HEK293 (cell line): ENCODE measurements at regions of chr6 and their contacts with region 1.

Region 1: GRCh38 chr6:82270881-82271645 is 23.5 kb upstream of the IBTK start:
- H3K4me3 ChIP-seq: no peak overlapping the region
- H3K27ac ChIP-seq: no peak overlapping the region
- H3K4me1 ChIP-seq: no peaks in the 10 kb centered on the region
- CTCF ChIP-seq: peak; percentile 61; the same call in 1 of the 2 replicates

Region 2: DNA sequence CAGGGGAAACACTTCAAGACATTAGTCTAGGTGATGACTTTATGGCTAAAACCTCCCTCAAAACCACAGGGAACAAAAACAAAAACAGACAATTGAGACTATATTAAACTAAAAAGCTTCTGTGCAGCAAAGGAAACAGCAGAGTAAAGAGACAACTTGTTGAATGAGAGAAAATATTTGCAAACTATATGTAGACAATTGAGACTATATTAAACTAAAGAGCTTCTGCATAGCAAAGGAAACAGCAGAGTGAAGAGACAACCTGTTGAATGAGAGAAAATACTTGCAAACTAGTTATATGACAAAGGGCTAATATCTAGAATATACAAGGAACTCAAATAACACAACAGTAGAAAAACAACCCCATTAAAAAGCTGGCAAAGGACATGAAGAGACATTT is 159.9 kb before region 1 on chr6:
- CTCF ChIA-PET with region 1: no interaction called
- POLR2A ChIA-PET with region 1: no interaction called
- H3K4me3 ChIP-seq: no peak overlapping the region
- H3K27ac ChIP-seq: no peak overlapping the region
- H3K4me1 ChIP-seq: no peaks in the 10 kb centered on the region
- CTCF ChIP-seq: no peak

Region 3: GRCh38 chr6:82247634-82248232 is 23.3 kb before region 1 on chr6 and contains the start of gene IBTK:
- CTCF ChIA-PET with region 1: interaction called, 39 read pairs
- POLR2A ChIA-PET with region 1: no interaction called
- H3K4me3 ChIP-seq: peak within 1 kb of the TSS; percentile 78
- H3K27ac ChIP-seq: peak within 1 kb of the TSS; percentile 84
- H3K4me1 ChIP-seq: peaks cover 10% of the 10 kb centered on the region; the same call in 1 of the 2 replicates
- CTCF ChIP-seq: peak; percentile 35; the same call in 1 of the 2 replicates

Region 4: DNA sequence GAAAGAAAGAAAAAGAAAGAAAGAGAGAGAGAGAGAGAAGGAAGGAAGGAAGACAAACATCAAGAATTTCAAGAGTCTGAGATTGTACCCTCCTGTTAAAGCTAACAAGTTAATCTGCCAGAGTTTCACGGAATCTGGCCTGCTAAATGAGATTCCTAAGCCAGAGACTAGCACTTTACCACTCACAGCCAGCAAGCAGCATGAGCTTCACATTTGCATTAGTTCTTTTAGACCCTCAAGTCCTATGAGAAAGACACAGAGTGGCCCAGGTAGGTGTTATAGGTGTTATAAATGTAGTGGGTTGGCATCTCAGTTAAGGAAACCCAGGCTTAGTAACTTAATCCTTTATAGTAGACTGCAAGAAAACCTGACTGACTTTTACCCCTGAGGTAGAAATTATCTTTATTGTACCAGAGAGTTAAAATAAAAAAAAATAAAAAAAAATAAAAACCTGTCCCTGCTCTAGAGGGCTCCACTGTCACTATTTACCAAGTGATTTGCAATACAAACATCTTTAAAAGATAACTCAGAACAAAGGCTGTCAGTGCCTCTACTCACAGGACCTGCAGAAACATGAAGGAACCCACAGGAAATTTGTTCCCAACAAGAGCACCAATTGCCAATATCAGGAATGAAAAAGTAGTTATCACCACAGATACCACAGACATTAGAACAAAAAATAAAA is 13.8 kb before region 1 on chr6:
- CTCF ChIA-PET with region 1: interaction called, 39 read pairs
- POLR2A ChIA-PET with region 1: interaction called, 3 read pairs
- H3K4me3 ChIP-seq: no peak overlapping the region
- H3K27ac ChIP-seq: no peak overlapping the region
- H3K4me1 ChIP-seq: peaks cover 25% of the 10 kb centered on the region
- CTCF ChIP-seq: no peak; the same call in 1 of the 2 replicates

Region 5: DNA sequence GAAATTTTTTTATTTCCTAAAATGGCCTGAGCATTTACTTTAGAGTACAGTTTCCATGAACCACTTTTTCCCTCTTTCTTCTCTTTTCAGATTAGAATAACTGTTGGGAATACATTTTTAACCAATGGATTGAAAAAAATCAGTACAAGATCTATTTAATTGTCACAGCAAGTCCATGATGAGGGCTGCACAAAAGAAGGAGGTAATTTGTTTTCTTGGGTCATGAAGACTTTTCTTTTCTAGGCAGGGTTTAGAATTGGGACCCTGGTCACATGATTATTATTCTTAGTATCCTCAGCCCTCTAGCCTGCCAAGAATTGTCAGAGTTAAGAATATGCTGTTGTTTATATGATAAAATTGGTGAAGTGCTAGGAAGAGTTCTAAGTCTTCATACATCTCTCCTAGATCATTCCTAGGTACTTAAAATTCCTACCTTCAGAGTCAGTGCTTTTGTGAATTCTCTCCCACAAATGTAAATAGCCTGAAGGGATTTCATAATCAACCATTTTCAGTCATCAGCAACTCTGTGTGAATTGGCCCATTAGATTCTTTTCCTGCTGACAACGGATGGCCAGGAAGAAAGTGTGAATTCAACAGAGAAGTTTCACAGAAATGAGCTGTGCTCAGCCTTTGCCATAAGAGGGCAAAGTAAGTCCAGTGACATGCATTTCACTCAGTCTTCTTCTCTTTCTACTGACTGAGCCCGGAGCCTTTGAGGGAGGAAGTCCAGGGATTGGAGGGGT is 60.1 kb after region 1 on chr6:
- CTCF ChIA-PET with region 1: interaction called, 11 read pairs
- POLR2A ChIA-PET with region 1: no interaction called
- H3K4me3 ChIP-seq: no peak overlapping the region
- H3K27ac ChIP-seq: no peak overlapping the region
- H3K4me1 ChIP-seq: no peaks in the 10 kb centered on the region
- CTCF ChIP-seq: peak; percentile 42

Region 6: DNA sequence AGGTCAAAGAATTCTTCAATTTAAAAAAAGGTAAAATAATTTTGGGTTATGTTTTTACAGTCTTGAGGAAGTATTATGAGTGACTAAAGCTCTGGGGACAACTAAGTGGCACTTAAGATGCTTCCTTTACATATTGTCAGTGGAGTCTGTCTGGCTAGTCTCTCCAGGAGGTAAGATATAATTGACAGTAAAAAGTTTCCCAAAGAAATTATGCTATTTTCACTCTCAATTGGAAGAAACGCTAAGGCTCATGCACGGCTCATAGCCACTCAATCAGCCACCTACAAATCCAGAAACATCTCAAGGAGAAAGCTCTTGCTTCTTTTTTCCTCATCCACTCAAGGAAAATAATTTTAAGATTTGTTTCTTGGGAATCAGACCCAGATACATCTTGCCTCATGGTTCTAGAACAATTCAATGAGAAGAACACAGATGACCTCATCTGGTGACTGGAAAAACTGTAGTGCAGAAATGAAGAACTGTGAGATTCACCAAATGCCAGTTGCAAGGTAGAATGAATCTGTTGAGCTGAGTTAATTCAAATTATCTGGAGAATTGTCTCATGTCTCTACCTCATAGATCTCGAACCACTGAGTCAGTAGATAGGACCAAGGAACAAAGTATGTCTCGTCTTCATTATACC is 345.4 kb after region 1 on chr6:
- CTCF ChIA-PET with region 1: interaction called, 17 read pairs
- POLR2A ChIA-PET with region 1: no interaction called
- H3K4me3 ChIP-seq: no peak overlapping the region
- H3K27ac ChIP-seq: no peak overlapping the region
- H3K4me1 ChIP-seq: no peaks in the 10 kb centered on the region
- CTCF ChIP-seq: peak; percentile 37; the same call in 1 of the 2 replicates

Region 7: DNA sequence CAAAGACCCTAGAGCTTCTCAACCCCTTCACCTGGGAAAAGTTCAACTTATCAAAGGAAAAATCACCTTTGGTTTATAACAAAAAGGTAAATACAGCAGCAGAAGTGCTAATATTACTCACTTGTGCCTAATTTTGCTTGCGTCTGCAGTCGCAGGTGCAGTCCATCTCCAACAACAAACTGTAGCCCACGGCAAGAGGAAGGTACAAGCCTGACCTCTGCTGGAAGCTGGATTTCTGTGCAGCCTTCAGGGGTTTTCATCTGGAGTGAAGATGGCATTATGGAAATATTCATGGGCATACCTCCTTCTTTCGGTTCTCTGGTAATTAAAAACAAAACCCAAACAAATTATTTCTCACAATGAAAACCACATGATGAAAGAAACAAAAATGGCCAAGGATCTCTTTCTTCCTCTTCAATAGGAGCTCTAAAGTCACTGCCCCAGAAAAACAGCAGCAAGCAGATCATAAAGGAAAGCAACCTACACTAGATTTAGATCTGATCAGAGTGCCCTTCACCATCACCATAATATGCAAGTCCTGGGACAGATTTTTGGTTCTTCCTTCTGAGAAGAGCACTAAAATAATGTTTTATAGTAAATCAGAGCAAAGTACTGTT is 786.8 kb after region 1 on chr6:
- CTCF ChIA-PET with region 1: interaction called, 131 read pairs
- POLR2A ChIA-PET with region 1: interaction called, 3 read pairs
- H3K4me3 ChIP-seq: no peak overlapping the region
- H3K27ac ChIP-seq: no peak overlapping the region
- H3K4me1 ChIP-seq: no peaks in the 10 kb centered on the region
- CTCF ChIP-seq: no peak